ENCODE measurements at regions of chr11 and their contacts with region 1.

Region 1: GRCh38 chr11:68447015-68447801 is 13.3 kb upstream of the PPP6R3 start:
- DNase-seq: peak; percentile 74 to 83
- ATAC-seq: peak; percentile 88 to 95 (median 91)
- H3K4me3 ChIP-seq: no peak overlapping the region
- H3K27ac ChIP-seq: peak overlapping the region in 2 of 10 donors; percentile 9 to 13
- H3K4me1 ChIP-seq: peaks cover 0 to 10% (median 0%) of the 10 kb centered on the region in 9 donors
- H3K27me3 ChIP-seq: no peaks in the 10 kb centered on the region
- CTCF ChIP-seq: peak; percentile 88 to 98 (median 96)

Region 2: GRCh38 chr11:68235650-68236049 is 211.6 kb before region 1 on chr11:
- intact Hi-C with region 1: no loop called
- DNase-seq: no peak
- ATAC-seq: no peak
- H3K4me3 ChIP-seq: no peak overlapping the region
- H3K27ac ChIP-seq: no peak overlapping the region
- H3K4me1 ChIP-seq: no peaks in the 10 kb centered on the region
- H3K27me3 ChIP-seq: peaks cover 0 to 13% (median 4%) of the 10 kb centered on the region in 7 donors
- CTCF ChIP-seq: no peak

Region 3: DNA sequence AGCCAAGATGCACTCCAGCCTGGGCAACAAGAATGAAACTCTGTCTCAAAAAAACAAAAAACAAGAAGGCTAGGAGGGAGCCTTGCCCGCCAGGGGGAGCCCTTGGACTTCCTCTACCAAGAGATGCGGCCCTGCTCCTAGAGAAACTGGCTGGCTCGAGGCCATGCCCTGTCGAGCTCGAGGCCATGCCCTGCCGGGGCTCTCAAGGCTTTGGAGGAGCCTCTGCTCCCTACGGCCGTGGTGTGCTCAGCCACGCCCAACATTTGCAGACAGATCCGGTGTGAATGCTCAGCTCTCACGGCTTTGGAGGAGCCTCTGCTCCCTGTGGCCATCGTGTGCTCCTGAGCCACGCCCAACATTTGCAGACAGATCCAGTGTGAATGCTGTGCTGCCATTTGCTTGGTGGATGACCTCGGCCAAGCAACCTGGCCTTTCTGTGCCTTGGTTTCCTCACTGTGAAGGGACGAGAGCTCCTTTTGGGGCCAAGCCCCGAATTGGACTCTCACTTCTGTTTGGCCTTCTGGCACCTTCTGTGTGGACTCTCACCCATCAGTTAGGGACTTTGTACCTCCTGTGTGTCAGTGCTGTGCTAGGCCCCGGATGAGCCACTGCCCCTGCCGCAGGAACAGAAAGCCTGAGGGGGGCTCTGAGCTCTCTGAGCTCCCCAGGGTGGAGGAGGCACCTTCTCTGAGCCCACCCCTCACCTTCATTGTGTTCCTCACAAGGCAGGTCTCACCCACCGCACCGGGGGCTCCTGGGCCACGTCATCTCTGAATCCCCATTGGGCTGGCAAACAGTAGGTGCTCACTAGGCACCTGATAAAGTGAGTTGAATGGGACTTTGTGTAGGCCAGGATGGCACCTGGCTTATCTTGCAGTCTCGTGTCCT is 189.5 kb before region 1 on chr11:
- intact Hi-C with region 1: loop called (anchors 1 to 10 kb)
- DNase-seq: peak; percentile 94 to 97
- ATAC-seq: peak; percentile 70 to 91 (median 86)
- H3K4me3 ChIP-seq: peak overlapping the region in 4 of 10 donors; percentile 18 to 23 (median 20)
- H3K27ac ChIP-seq: peak overlapping the region in 1 of 10 donors; percentile 36
- H3K4me1 ChIP-seq: peaks cover 0 to 30% (median 6%) of the 10 kb centered on the region in 9 donors
- H3K27me3 ChIP-seq: no peaks in the 10 kb centered on the region
- CTCF ChIP-seq: peak; percentile 78 to 94 (median 89)

Region 4: GRCh38 chr11:68266121-68266891 is 180.9 kb before region 1 on chr11:
- intact Hi-C with region 1: loop called in 2 of 10 experiments (anchors 10 kb)
- DNase-seq: no peak
- ATAC-seq: no peak
- H3K4me3 ChIP-seq: no peak overlapping the region
- H3K27ac ChIP-seq: peak overlapping the region in 1 of 10 donors; percentile 28
- H3K4me1 ChIP-seq: peaks cover 6 to 42% (median 24%) of the 10 kb centered on the region in 9 donors
- H3K27me3 ChIP-seq: no peaks in the 10 kb centered on the region
- CTCF ChIP-seq: no peak

Region 5: DNA sequence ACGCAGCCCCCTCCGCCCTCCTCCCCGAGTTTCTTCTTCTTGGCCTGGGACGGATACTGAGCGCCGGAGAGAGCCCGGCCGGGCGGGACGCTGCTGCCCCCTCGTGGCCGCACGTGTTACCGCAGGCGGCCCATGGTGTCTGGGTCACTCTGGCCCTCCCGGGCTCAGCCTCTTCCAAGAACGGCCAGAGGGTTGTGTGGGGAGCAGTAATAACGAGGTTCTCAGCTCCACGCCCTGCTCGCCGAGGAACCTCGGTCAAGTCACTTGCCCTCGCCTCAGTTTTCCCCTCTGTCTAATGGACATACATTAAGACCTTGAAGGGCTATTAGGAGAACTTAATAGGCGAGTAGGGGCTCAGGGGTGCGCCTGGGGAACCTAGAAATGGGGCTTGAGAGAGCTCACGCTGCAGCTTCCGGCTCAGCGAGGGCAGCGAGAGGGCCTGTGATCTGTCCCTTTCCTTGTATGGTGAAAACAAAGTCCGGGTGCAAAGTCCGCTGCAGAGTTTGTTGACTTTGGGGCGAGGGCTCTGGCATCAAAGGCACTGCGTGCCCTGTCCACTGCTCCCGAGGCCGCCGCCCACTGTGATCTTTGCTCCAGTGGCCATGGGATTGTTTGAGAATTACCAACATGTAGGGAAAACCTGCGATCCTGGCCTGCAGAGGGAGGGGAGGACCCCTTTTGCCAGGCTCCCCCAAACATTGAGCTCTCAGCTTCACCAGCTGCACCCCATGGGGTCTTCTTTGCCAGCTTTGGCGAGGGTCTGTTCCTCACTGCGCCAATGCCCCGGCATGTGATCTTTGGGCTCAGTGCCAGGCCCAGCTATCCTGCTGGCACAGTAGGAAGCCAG is 149.2 kb before region 1 on chr11:
- intact Hi-C with region 1: loop called in 4 of 10 experiments (anchors 2 to 10 kb)
- DNase-seq: peak; percentile 75 to 83
- ATAC-seq: peak; percentile 95 to 98 (median 97)
- H3K4me3 ChIP-seq: peak overlapping the region in 4 of 10 donors; percentile 9 to 23 (median 20)
- H3K27ac ChIP-seq: peak overlapping the region in 1 of 10 donors; percentile 5
- H3K4me1 ChIP-seq: peaks cover 6 to 28% (median 17%) of the 10 kb centered on the region in 9 donors
- H3K27me3 ChIP-seq: no peaks in the 10 kb centered on the region
- CTCF ChIP-seq: peak; percentile 97 to 99 (median 98)

Region 6: DNA sequence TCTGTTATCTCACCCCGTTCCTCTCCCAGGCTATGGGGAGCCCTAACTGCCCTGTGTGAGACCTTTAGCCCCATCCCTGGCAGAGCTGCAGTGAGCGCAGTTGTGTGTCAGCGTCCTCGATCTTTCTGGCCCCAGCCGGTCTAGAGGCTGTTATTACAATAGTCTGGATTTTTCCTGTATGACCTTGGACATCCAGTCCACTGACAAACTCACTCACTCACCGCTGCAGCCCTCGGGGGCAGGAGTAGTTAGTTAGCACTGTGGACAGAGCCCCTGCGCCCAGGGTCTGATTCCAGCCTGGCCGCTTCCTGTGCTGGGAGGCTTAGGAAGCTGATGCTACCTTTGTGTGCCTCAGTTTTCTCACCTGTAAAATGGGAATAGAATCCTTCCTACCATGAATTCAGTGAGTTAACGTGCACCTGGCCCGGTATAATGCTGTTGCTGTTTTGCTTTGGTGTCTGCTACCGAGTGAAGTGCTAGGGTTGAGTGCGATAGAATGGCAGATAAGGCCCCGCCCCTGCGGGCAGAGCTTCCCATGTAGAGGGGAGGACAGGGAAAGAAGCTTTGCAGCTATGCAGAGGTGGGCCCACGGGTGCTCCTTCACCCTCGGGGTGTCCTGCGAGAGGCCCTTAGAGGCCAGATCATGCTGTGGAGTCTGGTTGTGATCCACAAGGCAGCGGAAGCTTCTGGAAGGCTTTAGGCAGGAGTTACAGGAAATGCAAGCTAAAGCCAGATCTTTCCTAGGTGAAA is 131.9 kb before region 1 on chr11:
- intact Hi-C with region 1: no loop called
- DNase-seq: no peak
- ATAC-seq: peak in 6 of 8 donors; percentile 30 to 52 (median 44)
- H3K4me3 ChIP-seq: peak overlapping the region in 6 of 10 donors; percentile 66 to 87 (median 72)
- H3K27ac ChIP-seq: peak overlapping the region; percentile 80 to 95 (median 86)
- H3K4me1 ChIP-seq: peaks cover 26 to 63% (median 51%) of the 10 kb centered on the region in 9 donors
- H3K27me3 ChIP-seq: peaks cover 0 to 32% (median 0%) of the 10 kb centered on the region in 7 donors
- CTCF ChIP-seq: no peak

Measured in heart right ventricle (tissue), 16 donors.